ENCODE measurements at regions of chr17 and their contacts with region 1.

Region 1: GRCh38 chr17:40075201-40075941 is 12.6 kb downstream of the THRA start:
- DNase-seq: peak; percentile 83
- ATAC-seq: peak; percentile 88
- H3K4me3 Mint-ChIP-seq: no peak overlapping the region
- H3K27ac Mint-ChIP-seq: peak overlapping the region; percentile 72
- H3K4me1 Mint-ChIP-seq: peaks cover 33% of the 10 kb centered on the region
- H3K27me3 Mint-ChIP-seq: no peaks in the 10 kb centered on the region

Region 2: DNA sequence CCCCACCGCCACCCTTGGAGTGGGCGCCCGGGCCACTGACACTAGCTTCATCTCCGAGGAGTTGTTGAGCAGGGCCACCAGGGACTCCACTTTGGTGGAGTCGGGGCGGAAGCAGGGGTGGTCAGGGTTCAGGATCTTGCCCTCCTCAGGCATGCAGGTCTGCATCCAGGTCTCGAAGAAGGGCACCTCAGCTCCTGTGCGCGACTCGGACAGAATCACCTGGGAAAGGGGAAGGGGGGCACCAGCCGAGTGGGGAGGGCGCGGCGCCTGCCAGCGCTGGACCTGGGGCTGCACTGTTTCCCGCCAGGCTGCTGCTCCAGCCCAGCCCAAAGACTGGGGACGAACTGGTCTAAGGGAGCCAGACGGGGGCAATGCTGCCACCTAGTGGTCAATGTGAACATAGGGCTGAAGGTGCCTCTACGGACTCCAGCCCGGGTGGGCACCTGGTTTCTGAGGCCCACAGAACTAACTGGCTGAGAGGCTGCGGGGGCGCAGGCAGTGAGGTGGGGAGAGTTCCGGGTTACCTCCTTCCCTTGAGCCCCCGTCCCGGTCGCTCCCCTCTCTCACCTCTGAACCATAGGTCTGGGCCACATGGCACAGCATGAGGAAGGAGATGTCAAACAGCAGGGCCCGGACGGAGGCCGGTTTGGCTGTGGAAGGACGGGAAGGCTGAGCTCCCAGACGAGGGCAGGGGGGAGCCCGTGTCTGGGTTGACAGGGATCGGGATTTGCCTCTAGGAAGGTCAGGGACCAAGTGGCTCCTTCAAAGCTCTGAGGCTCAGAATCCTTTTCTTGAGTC is 48.4 kb before region 1 on chr17:
- CTCF ChIA-PET with region 1: interaction called, 5 read pairs
- POLR2A ChIA-PET with region 1: no interaction called
- intact Hi-C with region 1: loop called in 1 of 2 experiments (anchors 5 kb)
- DNase-seq: peak; percentile 86
- ATAC-seq: peak; percentile 94
- H3K4me3 Mint-ChIP-seq: no peak overlapping the region
- H3K27ac Mint-ChIP-seq: no peak overlapping the region
- H3K4me1 Mint-ChIP-seq: peaks cover 22% of the 10 kb centered on the region
- H3K27me3 Mint-ChIP-seq: no peaks in the 10 kb centered on the region

Region 3: DNA sequence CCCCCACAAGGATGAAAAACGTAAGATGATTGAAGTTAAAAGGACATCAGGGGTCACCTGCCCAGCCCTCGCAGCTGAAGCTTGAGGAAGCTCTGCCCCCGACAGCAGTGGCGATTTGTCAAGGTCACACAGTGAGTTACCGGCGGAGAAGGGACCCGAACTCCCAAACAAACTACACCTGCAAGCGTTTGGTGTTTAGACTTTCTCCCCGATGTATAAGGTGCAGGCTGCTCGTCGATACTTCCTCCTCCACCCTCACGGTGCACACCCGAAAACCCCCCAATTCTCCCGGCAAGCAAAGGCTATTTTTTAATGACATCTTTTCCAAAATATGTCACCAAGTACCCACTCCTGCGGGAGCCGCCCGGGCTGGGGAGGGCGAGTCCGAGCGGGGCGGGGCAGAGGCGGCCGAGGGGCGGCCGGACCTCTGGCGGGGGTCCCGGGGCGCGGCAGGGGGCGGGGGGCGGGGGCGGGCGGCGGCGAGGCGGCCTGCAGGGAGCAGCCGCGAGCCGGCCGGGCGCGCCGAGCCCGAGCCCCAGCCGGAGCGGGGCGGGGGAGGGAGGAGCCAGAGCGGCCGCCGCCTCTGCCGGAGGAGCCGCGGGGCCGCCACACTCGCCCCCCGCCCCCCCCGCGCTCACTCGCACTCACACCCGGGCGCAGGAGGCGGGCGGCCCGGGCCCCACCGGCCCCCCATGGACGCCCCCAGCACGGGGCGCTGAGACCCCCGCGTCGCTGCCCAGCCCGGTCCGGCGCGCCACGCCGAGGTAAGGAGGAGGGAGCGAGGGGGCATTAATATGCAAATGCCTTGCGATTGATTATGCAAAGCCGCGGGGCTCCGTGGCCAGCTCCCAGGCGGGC is 12.8 kb before region 1 on chr17 and contains the start of gene THRA:
- CTCF ChIA-PET with region 1: interaction called, 85 read pairs
- POLR2A ChIA-PET with region 1: interaction called, 6 read pairs
- intact Hi-C with region 1: loop called in 1 of 2 experiments (anchors 1 kb)
- DNase-seq: peak; percentile 82
- ATAC-seq: peak; percentile 84
- H3K4me3 Mint-ChIP-seq: peak within 1 kb of the TSS; percentile 77
- H3K27ac Mint-ChIP-seq: peak within 1 kb of the TSS; percentile 74
- H3K4me1 Mint-ChIP-seq: peaks cover 45% of the 10 kb centered on the region
- H3K27me3 Mint-ChIP-seq: no peaks in the 10 kb centered on the region
- total RNA-seq, gene THRA: 12.9 to 13.1 TPM

Region 4: GRCh38 chr17:40086150-40087044 is 11.0 kb after region 1 on chr17:
- CTCF ChIA-PET with region 1: interaction called, 31 read pairs
- POLR2A ChIA-PET with region 1: no interaction called
- intact Hi-C with region 1: no loop called
- DNase-seq: peak; percentile 81
- ATAC-seq: peak; percentile 78
- H3K4me3 Mint-ChIP-seq: no peak overlapping the region
- H3K27ac Mint-ChIP-seq: no peak overlapping the region
- H3K4me1 Mint-ChIP-seq: peaks cover 5% of the 10 kb centered on the region
- H3K27me3 Mint-ChIP-seq: no peaks in the 10 kb centered on the region

Region 5: DNA sequence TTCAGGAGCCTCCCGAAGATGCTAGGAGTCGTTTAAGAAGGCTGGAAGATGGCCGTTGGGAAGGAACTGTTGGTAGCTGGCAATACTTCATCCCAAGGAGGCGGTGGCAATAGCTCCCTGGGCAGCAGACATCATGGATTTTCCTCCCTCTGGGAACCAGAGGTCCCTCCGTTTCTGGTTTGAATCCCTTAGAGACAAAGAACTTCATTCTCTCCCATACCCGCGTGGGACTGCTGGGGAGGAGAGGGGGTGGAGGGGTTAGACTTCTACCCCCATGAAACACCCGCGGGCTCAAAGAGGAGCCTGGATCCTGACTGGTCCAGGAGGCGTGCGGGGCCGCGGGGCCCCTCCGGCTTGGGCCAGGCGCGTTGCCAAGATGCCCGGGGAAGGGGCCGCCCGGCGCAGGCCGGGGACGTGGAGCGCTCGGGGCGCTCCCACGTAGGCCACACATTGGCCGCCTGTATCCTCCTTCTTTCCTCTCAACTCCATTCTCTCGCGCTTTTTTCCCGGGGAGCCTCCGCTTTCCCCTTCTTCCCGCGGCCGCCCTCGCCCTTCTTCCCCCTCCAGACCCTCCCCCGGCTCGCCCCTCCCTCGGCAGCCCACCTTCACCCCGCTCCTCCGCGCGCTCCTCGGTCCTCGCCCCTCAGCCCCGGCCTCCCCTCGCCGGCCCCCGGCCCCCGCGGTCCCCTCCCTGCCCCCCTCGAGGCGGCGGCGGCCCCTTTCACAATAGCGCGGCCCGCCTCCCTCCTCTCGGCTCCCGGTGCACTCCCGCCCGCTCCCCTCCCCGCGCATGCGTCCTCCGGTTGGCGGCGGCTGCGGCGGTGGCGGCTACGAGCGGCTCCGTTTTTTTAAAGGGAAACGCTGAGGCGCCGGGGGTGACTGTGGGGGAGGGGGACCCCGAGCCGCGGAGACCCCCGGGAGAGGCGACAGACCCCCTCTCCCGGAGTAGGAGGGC is 46.1 kb after region 1 on chr17 and contains the start of gene MSL1:
- CTCF ChIA-PET with region 1: interaction called, 14 read pairs
- POLR2A ChIA-PET with region 1: no interaction called
- intact Hi-C with region 1: no loop called
- DNase-seq: peak; percentile 92
- ATAC-seq: peak; percentile 69
- H3K4me3 Mint-ChIP-seq: peak within 1 kb of the TSS; percentile 79
- H3K27ac Mint-ChIP-seq: peak within 1 kb of the TSS; percentile 57
- H3K4me1 Mint-ChIP-seq: peaks cover 29% of the 10 kb centered on the region
- H3K27me3 Mint-ChIP-seq: no peaks in the 10 kb centered on the region
- total RNA-seq, gene MSL1: 81.7 to 89.6 TPM

Region 6: GRCh38 chr17:40157973-40158372 is 82.6 kb after region 1 on chr17:
- CTCF ChIA-PET with region 1: interaction called, 11 read pairs
- POLR2A ChIA-PET with region 1: no interaction called
- intact Hi-C with region 1: no loop called
- DNase-seq: no peak
- ATAC-seq: no peak
- H3K4me3 Mint-ChIP-seq: no peak overlapping the region
- H3K27ac Mint-ChIP-seq: peak overlapping the region; percentile 24
- H3K4me1 Mint-ChIP-seq: peaks cover 35% of the 10 kb centered on the region
- H3K27me3 Mint-ChIP-seq: no peaks in the 10 kb centered on the region

Measured in activated CD4-positive, alpha-beta T cell treated with anti-CD3 and anti-CD28 coated beads for 36 hours (primary cell).